GM12878 (cell line): ENCODE measurements at regions of chr16 and their contacts with region 1.

Region 1: GRCh38 chr16:27401768-27402568 is at the start of gene IL21R:
- DNase-seq: peak; percentile 85
- ATAC-seq: peak; percentile 56
- H3K4me3 ChIP-seq: peak within 1 kb of the TSS; percentile 86
- H3K27ac ChIP-seq: peak within 1 kb of the TSS; percentile 97
- H3K4me1 ChIP-seq: peaks cover 53% of the 10 kb centered on the region
- H3K27me3 ChIP-seq: no peaks in the 10 kb centered on the region
- CTCF ChIP-seq: no peak
- EP300 ChIP-seq: peak in 1 of 2 experiments; percentile 73; a peak in 2 of 4 replicates
- POLR2A ChIP-seq: peak; percentile 95
- RAD21 ChIP-seq: 0 out of 2 replicates have a peak, but pooled peaks have one; percentile 7
- polyA plus RNA-seq, gene IL21R: 5.3 to 9.7 TPM

Region 2: DNA sequence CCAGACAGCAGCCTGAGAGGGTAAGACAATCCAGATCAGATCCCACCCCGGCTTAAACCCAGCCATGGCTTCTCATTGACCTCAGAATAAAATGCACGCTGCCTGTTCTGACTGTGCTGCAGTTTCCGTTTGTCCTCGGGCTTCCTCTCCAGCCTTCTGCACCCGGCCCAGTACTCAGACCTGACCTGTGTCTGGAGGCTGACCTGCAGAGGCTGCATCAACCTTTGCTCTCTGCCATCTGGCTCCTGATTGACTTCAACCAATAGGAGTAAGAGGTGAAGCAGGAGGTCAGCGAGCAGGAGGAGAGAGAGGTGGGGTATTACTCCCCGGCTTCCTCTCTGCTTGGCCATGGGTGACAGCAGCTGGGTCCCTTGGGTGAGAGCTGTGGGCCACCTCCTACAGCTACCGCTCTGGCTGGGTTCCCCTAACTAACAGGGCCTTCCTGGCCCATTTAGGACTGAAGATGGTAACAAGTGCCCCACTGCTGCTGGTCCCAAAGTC is 288.6 kb before region 1 on chr16:
- CTCF ChIA-PET with region 1: no interaction called
- POLR2A ChIA-PET with region 1: no interaction called
- RAD21 ChIA-PET with region 1: no interaction called
- SMC1A ChIA-PET with region 1: no interaction called
- in situ Hi-C with region 1: no loop called
- intact Hi-C with region 1: no loop called
- DNase-seq: peak; percentile 20
- ATAC-seq: peak; percentile 78
- H3K4me3 ChIP-seq: no peak overlapping the region
- H3K27ac ChIP-seq: no peak overlapping the region
- H3K4me1 ChIP-seq: peaks cover 4% of the 10 kb centered on the region; the same call in 1 of the 2 replicates
- H3K27me3 ChIP-seq: peaks cover 0 to 2% of the 10 kb centered on the region in 2 experiments; a peak in 1 of 4 replicates
- CTCF ChIP-seq: no peak
- EP300 ChIP-seq: no peak
- POLR2A ChIP-seq: no peak
- RAD21 ChIP-seq: no peak

Region 3: GRCh38 chr16:27242868-27243590 is 158.9 kb before region 1 on chr16:
- CTCF ChIA-PET with region 1: interaction called, 6 read pairs
- POLR2A ChIA-PET with region 1: interaction called, 10 read pairs
- RAD21 ChIA-PET with region 1: interaction called, 4 read pairs
- SMC1A ChIA-PET with region 1: interaction called, 28 read pairs
- in situ Hi-C with region 1: no loop called
- intact Hi-C with region 1: no loop called
- DNase-seq: peak; percentile 71
- ATAC-seq: peak; percentile 91
- H3K4me3 ChIP-seq: peak overlapping the region; percentile 30; the same call in 1 of the 2 replicates
- H3K27ac ChIP-seq: peak overlapping the region; percentile 47
- H3K4me1 ChIP-seq: peaks cover 20% of the 10 kb centered on the region
- H3K27me3 ChIP-seq: no peaks in the 10 kb centered on the region
- CTCF ChIP-seq: no peak
- EP300 ChIP-seq: peak in 1 of 2 experiments; percentile 72; a peak in 2 of 4 replicates
- POLR2A ChIP-seq: no peak
- RAD21 ChIP-seq: no peak

Region 4: GRCh38 chr16:27273670-27274423 is 128.1 kb before region 1 on chr16:
- CTCF ChIA-PET with region 1: interaction called, 4 read pairs
- POLR2A ChIA-PET with region 1: interaction called, 11 read pairs
- RAD21 ChIA-PET with region 1: interaction called, 14 read pairs
- SMC1A ChIA-PET with region 1: interaction called, 6 read pairs
- in situ Hi-C with region 1: no loop called
- intact Hi-C with region 1: no loop called
- DNase-seq: no peak
- ATAC-seq: peak; percentile 82
- H3K4me3 ChIP-seq: no peak overlapping the region
- H3K27ac ChIP-seq: no peak overlapping the region
- H3K4me1 ChIP-seq: peaks cover 16% of the 10 kb centered on the region
- H3K27me3 ChIP-seq: no peaks in the 10 kb centered on the region
- CTCF ChIP-seq: no peak
- EP300 ChIP-seq: 0 out of 4 replicates have a peak, but pooled peaks of 1 of the 2 experiments have one; percentile 17
- POLR2A ChIP-seq: no peak
- RAD21 ChIP-seq: no peak

Region 5: GRCh38 chr16:27374804-27375425 is 27.1 kb before region 1 on chr16:
- CTCF ChIA-PET with region 1: interaction called, 20 read pairs
- POLR2A ChIA-PET with region 1: interaction called, 208 read pairs
- RAD21 ChIA-PET with region 1: interaction called, 224 read pairs
- SMC1A ChIA-PET with region 1: interaction called, 220 read pairs
- in situ Hi-C with region 1: no loop called
- intact Hi-C with region 1: loop called (anchors 1 kb)
- DNase-seq: peak; percentile 90
- ATAC-seq: peak; percentile 72
- H3K4me3 ChIP-seq: peak overlapping the region; percentile 56
- H3K27ac ChIP-seq: peak overlapping the region; percentile 72
- H3K4me1 ChIP-seq: peaks cover 61% of the 10 kb centered on the region
- H3K27me3 ChIP-seq: no peaks in the 10 kb centered on the region
- CTCF ChIP-seq: peak; percentile 39 to 50 (median 42); a peak in 4 of 6 replicates
- EP300 ChIP-seq: no peak
- POLR2A ChIP-seq: peak; percentile 77
- RAD21 ChIP-seq: peak; percentile 37; the same call in 1 of the 2 replicates

Region 6: DNA sequence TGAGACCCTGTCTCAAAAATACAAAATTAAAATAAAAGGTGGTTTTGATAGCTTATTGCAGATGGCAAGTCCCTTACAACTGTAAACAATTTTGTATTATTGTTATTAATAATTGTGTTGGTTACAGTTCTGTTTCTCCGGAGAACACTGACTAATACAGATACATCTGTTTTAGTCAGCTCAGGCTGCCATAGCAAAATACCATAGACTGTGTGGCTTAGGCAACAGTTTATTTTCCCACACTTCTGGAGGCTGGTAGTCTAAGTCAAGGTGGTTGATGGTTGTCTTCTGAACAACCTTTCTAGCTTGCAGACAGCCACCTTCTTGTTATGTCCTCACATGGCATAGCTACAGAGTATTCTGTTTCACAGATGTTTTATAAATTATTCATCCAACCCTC is 14.2 kb before region 1 on chr16:
- CTCF ChIA-PET with region 1: interaction called, 13 read pairs
- POLR2A ChIA-PET with region 1: interaction called, 33 read pairs
- RAD21 ChIA-PET with region 1: interaction called, 25 read pairs
- SMC1A ChIA-PET with region 1: interaction called, 42 read pairs
- in situ Hi-C with region 1: no loop called
- intact Hi-C with region 1: loop called (anchors 1 kb)
- DNase-seq: peak; percentile 74
- ATAC-seq: peak; percentile 88
- H3K4me3 ChIP-seq: no peak overlapping the region
- H3K27ac ChIP-seq: peak overlapping the region; percentile 54
- H3K4me1 ChIP-seq: peaks cover 37% of the 10 kb centered on the region
- H3K27me3 ChIP-seq: no peaks in the 10 kb centered on the region
- CTCF ChIP-seq: no peak
- EP300 ChIP-seq: peak; percentile 65 to 95; a peak in 2 of 4 replicates
- POLR2A ChIP-seq: no peak
- RAD21 ChIP-seq: no peak

Region 7: GRCh38 chr16:27449434-27450195 is 47.6 kb after region 1 on chr16:
- CTCF ChIA-PET with region 1: interaction called, 25 read pairs
- POLR2A ChIA-PET with region 1: interaction called, 132 read pairs
- RAD21 ChIA-PET with region 1: interaction called, 145 read pairs
- SMC1A ChIA-PET with region 1: interaction called, 82 read pairs
- in situ Hi-C with region 1: no loop called
- intact Hi-C with region 1: no loop called
- DNase-seq: no peak
- ATAC-seq: peak; percentile 79
- H3K4me3 ChIP-seq: no peak overlapping the region
- H3K27ac ChIP-seq: peak overlapping the region; percentile 66
- H3K4me1 ChIP-seq: peaks cover 57% of the 10 kb centered on the region
- H3K27me3 ChIP-seq: no peaks in the 10 kb centered on the region
- CTCF ChIP-seq: no peak
- EP300 ChIP-seq: peak; percentile 81; a peak in 3 of 4 replicates
- POLR2A ChIP-seq: peak; percentile 76
- RAD21 ChIP-seq: 0 out of 2 replicates have a peak, but pooled peaks have one; percentile 1